ENCODE measurements at regions of chr2 and their contacts with region 1.

Region 1: DNA sequence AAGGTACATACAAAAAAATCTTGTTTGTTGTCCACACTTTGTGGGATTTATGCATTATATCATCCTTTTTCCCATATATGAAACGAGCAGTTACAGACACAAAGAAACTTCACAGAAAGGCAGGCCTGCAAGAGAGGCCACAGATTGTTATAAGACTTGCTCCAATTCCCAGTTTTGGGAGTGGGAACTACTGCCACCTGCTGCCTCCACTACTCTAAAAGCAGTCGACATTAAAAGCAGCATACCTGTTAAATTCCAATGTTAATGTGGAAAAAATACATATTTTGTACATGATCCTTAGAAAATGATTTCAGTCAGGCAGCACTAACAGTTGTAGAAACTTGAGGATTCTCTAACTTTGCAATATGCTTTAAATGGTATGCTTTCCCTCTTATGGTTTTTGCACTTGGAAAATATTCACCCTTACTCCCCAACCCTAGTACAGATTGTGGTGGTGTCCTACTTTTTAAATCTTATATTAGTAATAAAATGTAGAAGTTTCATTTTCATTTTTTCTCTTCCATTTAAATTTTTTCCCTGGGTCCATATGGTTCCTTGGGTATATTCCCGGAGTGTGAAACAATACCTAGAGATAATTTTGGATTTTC is 37.9 kb downstream of the SLC38A11 start:
- DNase-seq: peak; percentile 35
- ATAC-seq: peak; percentile 74

Region 2: GRCh38 chr2:163601377-163601776 is 1316.0 kb before region 1 on chr2:
- intact Hi-C with region 1: no loop called
- DNase-seq: no peak
- ATAC-seq: no peak

Region 3: GRCh38 chr2:164737612-164738081 is 179.8 kb before region 1 on chr2:
- intact Hi-C with region 1: loop called (anchors 1 kb)
- DNase-seq: peak; percentile 54
- ATAC-seq: peak; percentile 85

Measured in left ventricle myocardium superior (tissue), 1 donor.